ENCODE measurements at regions of chrX and their contacts with region 1.

Region 1: DNA sequence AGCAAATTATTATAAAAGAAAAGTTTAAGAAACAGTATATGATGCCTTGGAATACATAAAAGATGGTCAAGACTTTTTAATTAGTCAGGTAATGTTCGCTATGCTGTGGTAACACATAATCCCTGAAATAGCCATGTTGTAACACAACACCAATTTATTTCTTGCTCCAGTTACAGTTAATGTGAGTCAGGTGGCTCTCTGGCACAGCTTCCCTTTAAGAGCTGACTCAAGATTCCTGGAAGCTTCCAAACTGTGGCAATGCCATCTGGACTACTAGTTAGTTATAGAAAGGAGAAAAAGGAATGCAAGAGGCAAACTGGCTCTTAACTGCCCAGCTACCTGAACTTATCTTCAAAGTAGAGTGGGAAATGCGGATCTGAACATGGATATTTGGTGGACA is 210.5 kb downstream of the CHM start:
- DNase-seq: no peak
- H3K4me3 ChIP-seq: no peak overlapping the region
- H3K27ac ChIP-seq: no peak overlapping the region
- H3K4me1 ChIP-seq: no peaks in the 10 kb centered on the region
- H3K27me3 ChIP-seq: no peaks in the 10 kb centered on the region
- CTCF ChIP-seq: no peak

Region 2: DNA sequence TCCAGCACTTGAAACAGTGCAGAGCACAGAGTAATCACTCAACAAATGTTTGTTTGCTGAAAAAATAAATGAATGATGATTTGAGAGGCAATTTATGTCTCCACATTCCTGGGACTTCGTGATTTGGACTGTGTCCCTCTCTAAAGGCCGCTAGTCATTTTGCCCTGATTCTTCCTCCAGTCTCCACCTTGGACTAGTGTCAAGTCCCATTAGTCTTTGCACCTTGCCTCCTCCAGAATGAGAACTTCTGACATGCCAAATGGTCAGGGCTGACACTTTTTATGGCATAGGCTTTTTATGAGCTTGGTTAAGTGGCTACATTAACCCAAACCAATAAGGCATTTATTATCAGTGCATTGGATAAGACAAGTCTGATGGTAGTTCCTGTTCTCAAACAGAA is 392.3 kb before region 1 on chrX:
- CTCF ChIA-PET with region 1: no interaction called
- POLR2A ChIA-PET with region 1: no interaction called
- intact Hi-C with region 1: no loop called
- DNase-seq: no peak
- H3K4me3 ChIP-seq: no peak overlapping the region
- H3K27ac ChIP-seq: no peak overlapping the region
- H3K4me1 ChIP-seq: no peaks in the 10 kb centered on the region
- H3K27me3 ChIP-seq: no peaks in the 10 kb centered on the region
- CTCF ChIP-seq: no peak

Region 3: DNA sequence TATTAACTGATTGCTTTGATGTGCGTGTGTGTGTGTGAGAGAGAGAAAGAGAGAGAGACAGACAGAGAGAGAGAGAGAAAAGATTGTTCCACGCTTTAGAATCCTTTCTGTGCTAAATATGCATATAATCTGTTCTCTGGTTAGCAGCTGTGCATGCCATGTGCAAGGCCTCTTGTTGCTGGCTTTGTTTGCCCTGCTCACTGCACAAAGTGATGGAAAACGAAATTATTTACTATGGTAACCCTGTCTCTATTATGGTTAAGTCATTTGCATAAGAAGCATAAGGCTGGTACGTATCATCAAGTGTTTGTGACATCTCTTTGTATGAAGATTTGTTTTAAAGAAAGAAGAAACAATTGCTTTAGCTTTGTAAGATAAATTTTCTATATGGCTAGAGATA is 267.2 kb before region 1 on chrX:
- CTCF ChIA-PET with region 1: no interaction called
- POLR2A ChIA-PET with region 1: no interaction called
- intact Hi-C with region 1: no loop called
- DNase-seq: no peak
- H3K4me3 ChIP-seq: no peak overlapping the region
- H3K27ac ChIP-seq: no peak overlapping the region
- H3K4me1 ChIP-seq: no peaks in the 10 kb centered on the region
- H3K27me3 ChIP-seq: no peaks in the 10 kb centered on the region
- CTCF ChIP-seq: no peak

Region 4: DNA sequence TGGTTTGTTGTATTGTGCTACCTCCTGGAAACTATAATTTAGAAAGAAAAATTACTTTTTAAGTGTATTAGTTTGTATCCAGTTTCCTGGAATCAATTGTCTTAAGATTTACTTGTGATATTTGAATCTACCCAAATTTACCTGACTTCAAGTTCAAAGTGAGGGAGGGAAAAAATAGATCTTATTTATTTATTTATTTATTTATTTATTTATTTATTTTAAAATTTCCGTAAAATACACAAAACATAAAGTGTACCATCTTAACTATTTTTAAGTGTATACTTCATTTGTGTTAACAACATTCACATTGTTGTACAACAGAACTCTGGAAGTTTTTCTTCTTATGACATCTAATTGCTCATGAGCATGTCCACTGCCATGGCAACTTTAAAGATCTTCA is 667.4 kb after region 1 on chrX:
- CTCF ChIA-PET with region 1: no interaction called
- POLR2A ChIA-PET with region 1: interaction called, 4 read pairs
- intact Hi-C with region 1: loop called (anchors 5 kb)
- DNase-seq: no peak
- H3K4me3 ChIP-seq: no peak overlapping the region
- H3K27ac ChIP-seq: no peak overlapping the region
- H3K4me1 ChIP-seq: no peaks in the 10 kb centered on the region
- H3K27me3 ChIP-seq: no peaks in the 10 kb centered on the region
- CTCF ChIP-seq: no peak

Region 5: GRCh38 chrX:86579777-86580176 is 742.9 kb after region 1 on chrX:
- CTCF ChIA-PET with region 1: no interaction called
- POLR2A ChIA-PET with region 1: no interaction called
- intact Hi-C with region 1: loop called (anchors 5 kb)
- DNase-seq: no peak
- H3K4me3 ChIP-seq: no peak overlapping the region
- H3K27ac ChIP-seq: no peak overlapping the region
- H3K4me1 ChIP-seq: no peaks in the 10 kb centered on the region
- H3K27me3 ChIP-seq: no peaks in the 10 kb centered on the region
- CTCF ChIP-seq: no peak